ENCODE measurements at regions of chr17 and their contacts with region 1.

Region 1: GRCh38 chr17:49556223-49556971 is 19.3 kb upstream of the NXPH3 start:
- DNase-seq: peak; percentile 86
- ATAC-seq: peak; percentile 93 to 94

Region 2: GRCh38 chr17:49239963-49240362 is 316.4 kb before region 1 on chr17:
- intact Hi-C with region 1: no loop called
- DNase-seq: no peak
- ATAC-seq: no peak

Region 3: DNA sequence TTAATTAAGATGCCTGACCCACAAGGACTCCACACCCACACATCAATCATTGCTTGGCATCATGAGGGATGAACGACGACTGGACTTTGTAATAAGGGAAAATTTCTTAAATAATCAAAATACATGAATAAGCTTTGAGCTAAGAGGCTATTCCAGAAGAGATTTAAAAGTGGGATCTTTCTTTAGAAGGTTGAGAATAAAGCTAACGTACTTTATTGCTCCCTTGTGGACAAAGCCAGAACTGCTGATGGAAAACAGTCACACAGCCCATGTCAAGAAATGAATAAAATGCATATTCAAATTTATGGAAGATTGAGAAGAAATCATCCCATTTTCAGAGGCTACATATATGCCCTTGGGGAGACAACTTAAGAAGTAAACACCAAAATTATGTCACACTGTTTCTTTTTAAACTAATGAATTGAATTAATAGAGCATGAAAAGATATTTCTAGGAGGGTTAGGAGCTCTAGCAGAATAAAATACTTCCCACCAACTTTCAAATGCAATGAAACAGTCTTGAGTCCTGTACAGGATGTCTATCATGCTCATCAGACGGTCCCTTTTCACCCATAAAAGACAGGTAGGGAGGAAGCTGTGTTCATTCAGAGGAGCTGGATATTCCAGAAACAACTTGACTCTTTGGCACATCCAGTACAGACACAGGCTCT is 265.6 kb before region 1 on chr17:
- intact Hi-C with region 1: no loop called
- DNase-seq: no peak
- ATAC-seq: peak in 1 of 2 donors; percentile 38

Region 4: GRCh38 chr17:49315551-49316257 is 240.7 kb before region 1 on chr17:
- intact Hi-C with region 1: loop called in 1 of 2 experiments (anchors 10 kb)
- DNase-seq: peak; percentile 61
- ATAC-seq: peak; percentile 99

Region 5: DNA sequence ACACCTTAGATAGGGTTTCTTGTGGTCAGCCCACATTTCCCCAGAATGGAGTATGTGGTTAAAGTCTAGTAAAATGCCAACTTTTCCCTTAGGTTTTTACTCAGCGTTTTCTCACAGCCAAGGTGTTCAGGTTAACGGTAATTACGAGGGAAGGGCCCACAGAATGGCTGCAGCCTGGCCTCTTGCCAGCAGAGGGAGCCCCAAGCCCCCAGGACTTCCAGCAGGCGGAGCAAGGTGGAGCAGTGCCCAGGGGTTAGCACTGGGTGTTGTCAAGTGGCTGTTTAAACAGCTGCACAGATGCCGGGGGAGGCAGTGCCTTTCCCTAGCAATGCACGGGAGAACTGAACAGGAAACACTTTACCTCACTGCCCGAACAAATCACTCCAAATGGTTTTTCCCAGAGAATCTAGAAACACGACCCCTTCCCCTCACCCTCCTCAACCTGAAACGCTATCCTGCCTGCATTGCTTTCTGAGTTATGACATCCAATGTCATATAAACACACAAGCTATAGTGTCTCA is 148.4 kb before region 1 on chr17:
- intact Hi-C with region 1: loop called in 1 of 2 experiments (anchors 10 kb)
- DNase-seq: peak; percentile 72
- ATAC-seq: peak; percentile 73 to 79

Region 6: GRCh38 chr17:49434821-49435670 is 121.4 kb before region 1 on chr17:
- intact Hi-C with region 1: loop called in 1 of 2 experiments (anchors 1 kb)
- DNase-seq: peak; percentile 50
- ATAC-seq: peak; percentile 51 to 65

Region 7: GRCh38 chr17:49496183-49496866 is 60.1 kb before region 1 on chr17:
- intact Hi-C with region 1: loop called in 1 of 2 experiments (anchors 1 kb)
- DNase-seq: peak; percentile 86
- ATAC-seq: peak; percentile 89 to 90

Region 8: DNA sequence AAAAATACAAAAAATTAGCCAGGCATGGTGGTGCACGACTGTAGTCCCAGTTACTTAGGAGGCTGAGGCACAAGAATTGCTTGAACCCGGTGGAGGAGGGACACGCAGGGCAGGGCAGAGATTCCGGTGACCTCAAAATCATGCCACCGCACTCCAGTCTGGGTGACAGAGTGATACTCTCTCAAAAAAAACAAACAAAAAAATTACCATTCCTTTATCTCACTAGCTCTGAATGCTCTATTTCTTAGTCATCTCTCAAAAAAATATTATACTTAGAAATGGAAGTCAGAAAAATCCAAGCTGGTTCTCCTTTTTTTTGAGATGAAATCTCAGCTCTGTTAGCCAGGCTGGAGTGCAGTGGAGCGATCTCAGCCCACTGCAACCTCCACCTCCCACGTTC is 80.7 kb after region 1 on chr17:
- intact Hi-C with region 1: no loop called
- DNase-seq: no peak
- ATAC-seq: peak in 1 of 2 donors; percentile 47

Measured in left cardiac atrium (tissue), 4 donors.